ENCODE measurements at regions of chr4 and their contacts with region 1.

Region 1: GRCh38 chr4:42282081-42282901 is 115.0 kb upstream of the SHISA3 start:
- DNase-seq: peak; percentile 25
- H3K4me3 Mint-ChIP-seq: no peak overlapping the region
- H3K27ac Mint-ChIP-seq: no peak overlapping the region
- H3K4me1 Mint-ChIP-seq: peaks cover 5% of the 10 kb centered on the region
- H3K27me3 Mint-ChIP-seq: peaks cover 9% of the 10 kb centered on the region

Region 2: DNA sequence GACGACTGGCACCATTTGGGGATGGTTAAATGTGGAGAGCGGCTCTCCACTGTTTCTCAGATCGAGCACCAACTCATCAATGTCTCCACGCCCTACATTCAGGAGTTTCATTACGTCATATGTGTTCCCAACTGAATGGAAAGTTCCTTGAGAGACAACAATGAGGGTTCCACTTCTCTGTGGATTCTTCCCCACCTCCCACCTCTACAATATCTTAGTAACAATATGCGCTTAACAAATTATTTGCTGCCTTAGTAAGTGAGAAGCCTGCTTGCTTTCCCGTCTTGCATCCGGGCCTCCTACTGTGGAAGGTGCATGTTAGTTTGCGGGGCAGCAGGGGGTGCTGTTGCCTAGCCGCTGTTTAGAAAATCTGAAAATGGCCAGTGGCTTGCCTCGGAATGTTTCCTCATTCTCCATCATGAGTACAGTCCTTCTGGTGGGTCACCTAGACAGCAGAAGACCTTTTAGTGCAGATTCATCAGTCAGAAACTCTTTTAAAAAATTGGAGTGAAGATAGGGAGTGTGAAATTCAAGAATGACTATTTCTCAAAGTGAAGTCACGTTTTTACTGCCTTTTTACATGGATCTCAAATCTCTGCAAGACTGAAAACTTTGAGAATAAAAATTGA is 589.5 kb before region 1 on chr4:
- CTCF ChIA-PET with region 1: no interaction called
- POLR2A ChIA-PET with region 1: no interaction called
- intact Hi-C with region 1: loop called (anchors 10 kb)
- DNase-seq: peak; percentile 52
- H3K4me3 Mint-ChIP-seq: no peak overlapping the region
- H3K27ac Mint-ChIP-seq: no peak overlapping the region
- H3K4me1 Mint-ChIP-seq: peaks cover 3% of the 10 kb centered on the region
- H3K27me3 Mint-ChIP-seq: peaks cover 3% of the 10 kb centered on the region

Region 3: DNA sequence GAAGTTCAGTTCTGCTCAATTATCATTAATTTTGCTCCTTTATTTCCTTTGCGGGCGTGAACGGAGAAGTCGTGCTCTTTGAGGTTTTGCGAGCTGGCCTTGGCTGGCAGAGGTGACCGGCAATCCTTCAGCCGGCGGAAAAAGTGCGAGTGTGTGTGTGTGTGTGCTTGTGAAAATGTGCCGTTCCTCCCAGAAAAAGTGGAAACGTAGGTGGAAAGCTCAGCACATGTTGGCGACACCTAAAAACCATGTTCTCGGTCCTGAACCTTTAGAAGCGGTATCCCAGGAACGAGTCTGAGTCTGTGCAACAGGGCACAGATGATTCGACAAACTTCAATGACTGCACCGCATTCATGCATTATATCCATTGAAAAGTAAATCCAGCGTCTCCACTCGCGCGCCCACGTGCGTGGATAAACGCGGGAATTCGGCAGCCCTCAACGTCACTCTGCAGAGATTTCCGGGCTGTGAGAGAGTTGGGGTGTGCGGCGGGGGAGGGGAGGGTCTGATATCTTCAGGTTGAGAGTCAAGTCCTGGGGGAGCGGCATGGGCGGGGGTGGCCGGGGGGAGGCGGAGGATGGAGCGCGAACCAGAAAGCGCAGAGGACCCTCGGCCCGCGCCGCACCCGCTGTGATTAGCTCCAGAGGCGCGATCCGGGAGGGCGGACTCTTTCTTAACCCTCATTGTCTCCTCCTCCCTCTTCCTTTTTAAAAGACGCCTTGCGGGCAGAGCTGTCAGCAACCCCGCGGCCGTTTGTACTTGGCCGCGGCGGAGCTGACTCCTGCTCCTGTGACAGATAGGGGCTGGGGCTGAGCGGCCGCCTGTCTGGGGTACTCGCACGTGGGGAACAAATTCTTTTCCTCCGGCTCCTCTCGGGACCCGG is 114.7 kb after region 1 on chr4 and contains the start of gene SHISA3:
- CTCF ChIA-PET with region 1: interaction called, 3 read pairs
- POLR2A ChIA-PET with region 1: no interaction called
- intact Hi-C with region 1: loop called (anchors 1 kb)
- DNase-seq: peak; percentile 37
- H3K4me3 Mint-ChIP-seq: peak within 1 kb of the TSS; percentile 61
- H3K27ac Mint-ChIP-seq: no peak within 1 kb of the TSS
- H3K4me1 Mint-ChIP-seq: peaks cover 29% of the 10 kb centered on the region
- H3K27me3 Mint-ChIP-seq: peaks cover 61% of the 10 kb centered on the region
- total RNA-seq, gene SHISA3: 0.14 to 0.27 TPM

Region 4: GRCh38 chr4:42519803-42520417 is 237.6 kb after region 1 on chr4:
- CTCF ChIA-PET with region 1: interaction called, 71 read pairs
- POLR2A ChIA-PET with region 1: no interaction called
- intact Hi-C with region 1: loop called (anchors 1 kb)
- DNase-seq: peak; percentile 25
- H3K4me3 Mint-ChIP-seq: no peak overlapping the region
- H3K27ac Mint-ChIP-seq: no peak overlapping the region
- H3K4me1 Mint-ChIP-seq: no peaks in the 10 kb centered on the region
- H3K27me3 Mint-ChIP-seq: no peaks in the 10 kb centered on the region

Region 5: DNA sequence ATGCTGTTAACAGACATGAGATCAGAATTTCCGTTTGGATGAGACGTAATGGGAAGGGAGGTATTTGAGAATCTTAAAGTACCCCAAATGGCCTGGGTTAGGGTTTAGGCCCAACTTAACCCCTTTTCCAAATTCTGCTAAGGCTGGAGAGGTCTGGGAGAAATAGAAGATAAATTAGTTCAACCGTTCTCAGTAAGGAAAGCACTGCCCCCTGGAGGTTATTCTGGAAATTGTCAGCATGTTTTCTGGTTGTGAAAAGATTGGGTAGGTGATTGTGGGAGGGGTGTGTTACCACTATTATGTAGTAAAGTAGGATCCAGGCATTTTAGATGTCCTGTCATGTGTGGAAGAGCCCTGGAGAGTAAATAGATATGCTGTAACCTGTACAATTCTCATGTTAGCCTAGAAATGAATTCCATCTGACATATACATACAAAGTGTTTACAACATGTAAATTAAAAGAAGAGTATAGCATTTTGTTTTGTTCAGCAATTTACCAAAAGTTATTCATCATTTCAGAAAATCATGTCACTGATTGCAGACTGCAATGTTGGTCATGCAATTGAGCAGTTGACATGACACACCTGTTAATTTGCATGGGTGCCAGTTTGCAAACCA is 583.4 kb after region 1 on chr4:
- CTCF ChIA-PET with region 1: interaction called, 4 read pairs
- POLR2A ChIA-PET with region 1: no interaction called
- intact Hi-C with region 1: loop called (anchors 1 kb)
- DNase-seq: peak; percentile 43
- H3K4me3 Mint-ChIP-seq: no peak overlapping the region
- H3K27ac Mint-ChIP-seq: no peak overlapping the region
- H3K4me1 Mint-ChIP-seq: no peaks in the 10 kb centered on the region
- H3K27me3 Mint-ChIP-seq: peaks cover 21% of the 10 kb centered on the region

Measured in activated CD4-positive, alpha-beta memory T cell treated with anti-CD3 and anti-CD28 coated beads for 36 hours (primary cell).